Mammary epithelial cell (primary cell): ENCODE measurements at regions of chr3 and their contacts with region 1.

Region 1: DNA sequence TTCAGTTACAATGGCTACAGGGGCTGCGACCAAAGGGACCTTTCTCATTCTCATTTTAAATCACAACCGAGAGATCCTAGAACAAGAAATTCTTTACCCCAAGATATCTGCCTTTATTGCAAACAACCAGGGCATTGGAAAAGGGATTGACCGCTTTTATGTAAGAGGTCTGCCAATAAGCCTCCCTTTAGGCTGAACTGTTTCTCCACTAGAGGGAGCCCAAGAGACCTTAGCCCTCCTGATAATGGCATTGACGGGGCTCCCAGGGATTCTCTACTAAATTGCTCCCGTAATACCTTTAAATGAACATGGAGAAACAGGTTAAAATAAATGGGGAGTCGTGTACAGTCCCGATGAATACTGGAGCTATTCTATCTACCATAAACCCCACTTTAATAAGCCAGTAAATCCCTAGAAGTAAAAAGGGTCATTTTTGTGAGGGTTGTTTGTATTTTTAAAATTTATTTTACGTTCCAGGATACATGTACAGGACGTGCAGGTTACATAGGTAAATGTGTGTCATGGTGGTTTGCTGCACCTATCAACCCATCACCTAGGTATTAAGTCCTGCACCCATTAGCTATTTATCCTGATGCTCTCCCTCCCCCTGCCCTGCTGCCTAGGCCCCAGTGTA is 7.5 kb upstream of the IGSF10 start:
- DNase-seq: peak; percentile 35
- H3K4me3 ChIP-seq: no peak overlapping the region
- H3K27ac ChIP-seq: no peak overlapping the region
- H3K4me1 ChIP-seq: no peaks in the 10 kb centered on the region
- H3K27me3 ChIP-seq: peaks cover 4% of the 10 kb centered on the region
- CTCF ChIP-seq: peak; percentile 91

Region 2: DNA sequence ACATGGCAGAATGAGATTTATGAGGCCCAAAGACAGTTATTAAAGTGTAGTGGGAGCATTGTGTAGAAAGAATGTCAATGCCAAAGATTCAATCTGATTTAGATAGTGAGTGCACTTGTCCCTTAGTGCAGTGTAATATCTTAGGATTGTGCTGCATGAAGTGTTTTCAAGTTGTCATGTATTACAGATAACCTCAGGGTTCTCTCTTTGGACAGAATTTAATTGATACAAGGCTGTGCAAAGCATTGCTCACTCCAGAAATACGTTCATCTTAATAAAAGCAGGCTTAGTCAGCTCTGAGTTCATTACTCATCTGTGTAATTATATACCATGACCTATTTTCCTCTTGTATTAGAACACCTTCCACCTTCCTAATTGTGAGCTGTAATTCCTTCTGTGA is 249.3 kb before region 1 on chr3:
- CTCF ChIA-PET with region 1: no interaction called
- dilution Hi-C with region 1: no loop called
- in situ Hi-C with region 1: no loop called
- intact Hi-C with region 1: no loop called
- DNase-seq: peak; percentile 82
- H3K4me3 ChIP-seq: no peak overlapping the region
- H3K27ac ChIP-seq: no peak overlapping the region
- H3K4me1 ChIP-seq: peaks cover 10% of the 10 kb centered on the region
- H3K27me3 ChIP-seq: no peaks in the 10 kb centered on the region
- CTCF ChIP-seq: no peak

Region 3: DNA sequence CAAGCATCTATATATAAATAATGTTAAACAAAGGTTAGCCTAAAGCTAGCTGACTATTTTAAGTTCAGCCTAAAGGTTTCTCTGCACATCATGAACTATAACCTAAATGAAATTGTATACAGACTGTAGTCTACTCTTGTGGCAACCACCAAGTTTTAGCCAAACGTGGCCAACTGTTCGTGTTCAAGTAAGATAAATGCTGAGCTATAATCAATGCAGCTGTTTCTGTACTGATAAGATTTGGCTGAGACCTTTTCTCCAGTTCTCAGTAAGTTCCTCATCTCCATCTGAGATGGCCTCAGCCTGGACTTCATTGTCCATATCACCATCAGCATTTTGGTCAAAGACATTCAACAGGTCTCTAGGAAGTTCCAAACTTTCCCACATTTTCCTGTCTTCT is 36.2 kb after region 1 on chr3:
- CTCF ChIA-PET with region 1: no interaction called
- dilution Hi-C with region 1: no loop called
- in situ Hi-C with region 1: no loop called
- intact Hi-C with region 1: no loop called
- DNase-seq: no peak
- H3K4me3 ChIP-seq: no peak overlapping the region
- H3K27ac ChIP-seq: no peak overlapping the region
- H3K4me1 ChIP-seq: no peaks in the 10 kb centered on the region
- H3K27me3 ChIP-seq: no peaks in the 10 kb centered on the region
- CTCF ChIP-seq: no peak

Region 4: GRCh38 chr3:151611419-151611818 is 143.0 kb after region 1 on chr3:
- CTCF ChIA-PET with region 1: no interaction called
- dilution Hi-C with region 1: no loop called
- in situ Hi-C with region 1: no loop called
- intact Hi-C with region 1: no loop called
- DNase-seq: no peak
- H3K4me3 ChIP-seq: no peak overlapping the region
- H3K27ac ChIP-seq: no peak overlapping the region
- H3K4me1 ChIP-seq: no peaks in the 10 kb centered on the region
- H3K27me3 ChIP-seq: peaks cover 5% of the 10 kb centered on the region
- CTCF ChIP-seq: no peak

Region 5: GRCh38 chr3:151660885-151661284 is 192.5 kb after region 1 on chr3:
- CTCF ChIA-PET with region 1: no interaction called
- dilution Hi-C with region 1: no loop called
- in situ Hi-C with region 1: loop called in 1 of 2 experiments (anchors 25 kb)
- intact Hi-C with region 1: loop called (anchors 5 kb)
- DNase-seq: no peak
- H3K4me3 ChIP-seq: no peak overlapping the region
- H3K27ac ChIP-seq: no peak overlapping the region
- H3K4me1 ChIP-seq: no peaks in the 10 kb centered on the region
- H3K27me3 ChIP-seq: peaks cover 6% of the 10 kb centered on the region
- CTCF ChIP-seq: peak in 1 of 2 donors; percentile 14

Region 6: GRCh38 chr3:151918253-151919029 is 450.0 kb after region 1 on chr3:
- CTCF ChIA-PET with region 1: no interaction called
- dilution Hi-C with region 1: no loop called
- in situ Hi-C with region 1: no loop called
- intact Hi-C with region 1: loop called (anchors 1 kb)
- DNase-seq: peak; percentile 26
- H3K4me3 ChIP-seq: no peak overlapping the region
- H3K27ac ChIP-seq: no peak overlapping the region
- H3K4me1 ChIP-seq: no peaks in the 10 kb centered on the region
- H3K27me3 ChIP-seq: no peaks in the 10 kb centered on the region
- CTCF ChIP-seq: peak; percentile 63 to 67

Region 7: DNA sequence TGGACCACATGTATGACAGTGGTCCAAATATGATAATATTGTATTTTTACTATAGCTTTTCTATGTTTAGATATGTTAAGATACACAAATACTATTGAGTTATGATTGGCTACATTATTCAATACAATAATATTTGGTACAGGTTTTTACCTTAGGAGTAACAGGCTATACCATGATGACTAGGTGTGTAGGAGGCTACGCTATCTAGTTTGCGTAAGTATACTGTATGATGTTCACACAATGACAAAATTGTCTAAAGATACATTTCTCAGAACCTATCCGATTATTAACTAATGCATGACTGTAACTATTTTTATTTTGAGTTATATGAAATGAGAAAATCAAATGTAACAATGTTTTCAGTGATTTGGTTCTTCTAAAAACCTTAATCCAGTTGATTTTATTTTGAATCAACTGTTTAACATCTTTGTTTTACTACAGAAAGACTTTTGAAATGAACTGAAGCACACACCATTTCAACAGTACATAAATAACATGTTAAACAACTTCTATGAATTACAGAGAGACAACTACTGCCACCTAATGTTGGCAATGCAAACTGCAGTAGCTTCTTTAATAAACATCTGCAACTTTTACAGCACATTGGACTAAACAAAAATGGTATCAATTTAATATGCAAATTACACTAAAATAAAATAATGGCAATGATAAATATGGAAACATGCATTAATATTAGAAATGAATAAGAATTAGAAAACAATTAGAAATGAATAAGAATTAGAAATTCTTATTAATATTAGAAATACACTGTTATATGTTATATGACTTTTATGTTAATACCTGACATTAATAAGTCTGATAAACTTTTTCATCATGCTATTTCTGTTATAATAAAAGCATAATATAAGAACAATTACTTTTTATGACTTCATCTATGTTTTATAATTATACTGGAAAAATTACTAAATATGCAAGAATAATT is 1056.1 kb after region 1 on chr3:
- CTCF ChIA-PET with region 1: no interaction called
- dilution Hi-C with region 1: no loop called
- in situ Hi-C with region 1: loop called in 1 of 2 experiments (anchors 25 kb)
- intact Hi-C with region 1: no loop called
- DNase-seq: peak; percentile 12
- H3K4me3 ChIP-seq: no peak overlapping the region
- H3K27ac ChIP-seq: no peak overlapping the region
- H3K4me1 ChIP-seq: no peaks in the 10 kb centered on the region
- H3K27me3 ChIP-seq: no peaks in the 10 kb centered on the region
- CTCF ChIP-seq: peak; percentile 78 to 94